Naive thymus-derived CD4-positive, alpha-beta T cell (primary cell): ENCODE measurements at regions of chr5 and their contacts with region 1.

Region 1: GRCh38 chr5:36950586-36951457 is 74.3 kb downstream of the NIPBL start:
- DNase-seq: no peak
- ATAC-seq: no peak
- H3K4me3 ChIP-seq: no peak overlapping the region
- H3K4me3 Mint-ChIP-seq: peak overlapping the region in 3 of 10 donors; percentile 3 to 50 (median 7)
- H3K27ac ChIP-seq: no peak overlapping the region
- H3K27ac Mint-ChIP-seq: peak overlapping the region in 4 of 9 donors; percentile 34 to 48 (median 36)
- H3K4me1 ChIP-seq: peaks cover 4 to 18% of the 10 kb centered on the region in 2 donors
- H3K4me1 Mint-ChIP-seq: peaks cover 8 to 83% (median 75%) of the 10 kb centered on the region in 7 donors
- H3K27me3 ChIP-seq: no peaks in the 10 kb centered on the region
- H3K27me3 Mint-ChIP-seq: no peaks in the 10 kb centered on the region

Region 2: DNA sequence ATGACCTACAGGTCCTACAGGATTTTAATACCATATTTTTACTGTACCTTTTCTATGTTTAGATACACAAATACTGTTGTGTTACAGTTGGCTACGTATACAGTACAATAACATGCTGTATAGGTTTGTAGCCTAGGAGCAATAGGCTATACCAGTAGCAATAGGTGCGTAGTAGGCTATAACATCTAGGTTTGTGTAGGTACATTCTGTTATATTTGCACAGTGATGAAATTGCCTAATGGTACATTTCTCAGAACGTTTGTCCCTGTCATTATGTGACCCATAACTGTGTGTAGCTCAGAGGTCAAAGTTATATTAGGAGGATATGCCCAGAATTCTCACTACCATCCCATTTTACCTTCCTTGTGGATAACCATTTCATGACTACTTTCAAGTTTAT is 14.5 kb before region 1 on chr5:
- CTCF ChIA-PET with region 1: no interaction called
- POLR2A ChIA-PET with region 1: interaction called, 3 read pairs
- intact Hi-C with region 1: loop called in 1 of 2 experiments (anchors 2 kb)
- DNase-seq: no peak
- ATAC-seq: no peak
- H3K4me3 ChIP-seq: no peak overlapping the region
- H3K4me3 Mint-ChIP-seq: no peak overlapping the region
- H3K27ac ChIP-seq: no peak overlapping the region
- H3K27ac Mint-ChIP-seq: no peak overlapping the region
- H3K4me1 ChIP-seq: peaks cover 8 to 21% of the 10 kb centered on the region in 2 donors
- H3K4me1 Mint-ChIP-seq: peaks cover 16 to 97% (median 87%) of the 10 kb centered on the region in 7 donors
- H3K27me3 ChIP-seq: no peaks in the 10 kb centered on the region
- H3K27me3 Mint-ChIP-seq: no peaks in the 10 kb centered on the region